ENCODE measurements at regions of chr1 and their contacts with region 1.

Region 1: DNA sequence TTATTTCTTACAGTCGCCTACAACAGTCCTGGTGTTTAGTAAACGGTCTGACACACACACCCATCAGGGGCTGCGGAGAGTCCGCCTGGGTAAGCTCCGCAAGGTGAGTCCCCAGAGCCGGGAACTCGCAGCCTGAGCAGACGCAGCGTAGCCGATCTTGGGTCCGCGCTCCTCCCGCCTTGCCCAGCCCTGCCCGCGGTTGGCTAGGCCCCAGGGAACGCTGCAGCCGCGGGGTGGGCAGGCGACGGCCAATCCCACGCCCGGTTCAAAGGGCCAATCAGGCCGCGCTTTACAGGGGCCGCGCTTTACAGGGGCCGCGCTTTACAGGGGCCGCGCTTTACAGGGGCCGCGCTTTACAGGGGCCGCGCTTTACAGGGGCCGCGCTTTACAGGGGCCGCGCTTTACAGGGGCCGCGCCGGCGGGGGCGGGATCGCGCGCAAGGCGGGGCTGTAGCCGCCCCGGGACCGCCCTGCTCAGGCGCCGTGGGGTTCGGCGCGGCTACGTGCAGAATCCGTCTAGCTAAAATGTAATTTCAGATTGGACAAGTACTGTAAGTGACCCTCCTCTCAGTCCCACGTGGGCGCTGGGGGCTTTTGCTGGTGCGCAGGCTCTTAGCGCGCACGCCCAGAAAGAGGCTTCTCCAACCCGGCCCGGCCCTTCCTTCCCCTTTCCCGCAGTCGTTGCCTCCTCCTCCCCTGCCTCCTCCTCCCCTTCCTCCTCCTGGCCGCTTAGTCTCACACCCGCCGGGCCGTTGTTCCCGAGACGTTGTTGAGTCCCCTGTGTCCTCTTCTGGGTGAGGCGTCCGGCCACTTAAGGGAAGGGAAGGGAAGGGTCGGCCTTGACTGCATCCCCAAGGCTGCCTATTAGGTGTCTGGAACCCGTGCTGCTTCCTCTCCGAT is at the start of gene FGGY:
- DNase-seq: peak; percentile 69 to 96 (median 84)
- ATAC-seq: peak; percentile 92
- H3K4me3 ChIP-seq: peak within 1 kb of the TSS; percentile 75 to 77
- H3K4me3 Mint-ChIP-seq: peak within 1 kb of the TSS; percentile 90
- H3K27ac ChIP-seq: peak within 1 kb of the TSS; percentile 81 to 92
- H3K27ac Mint-ChIP-seq: peak within 1 kb of the TSS; percentile 96
- H3K4me1 ChIP-seq: no peaks in the 10 kb centered on the region
- H3K4me1 Mint-ChIP-seq: peaks cover 25% of the 10 kb centered on the region
- H3K27me3 ChIP-seq: no peaks in the 10 kb centered on the region
- H3K27me3 Mint-ChIP-seq: no peaks in the 10 kb centered on the region
- CTCF ChIP-seq: no peak
- total RNA-seq, gene FGGY: 12.8 to 14.3 TPM

Region 2: DNA sequence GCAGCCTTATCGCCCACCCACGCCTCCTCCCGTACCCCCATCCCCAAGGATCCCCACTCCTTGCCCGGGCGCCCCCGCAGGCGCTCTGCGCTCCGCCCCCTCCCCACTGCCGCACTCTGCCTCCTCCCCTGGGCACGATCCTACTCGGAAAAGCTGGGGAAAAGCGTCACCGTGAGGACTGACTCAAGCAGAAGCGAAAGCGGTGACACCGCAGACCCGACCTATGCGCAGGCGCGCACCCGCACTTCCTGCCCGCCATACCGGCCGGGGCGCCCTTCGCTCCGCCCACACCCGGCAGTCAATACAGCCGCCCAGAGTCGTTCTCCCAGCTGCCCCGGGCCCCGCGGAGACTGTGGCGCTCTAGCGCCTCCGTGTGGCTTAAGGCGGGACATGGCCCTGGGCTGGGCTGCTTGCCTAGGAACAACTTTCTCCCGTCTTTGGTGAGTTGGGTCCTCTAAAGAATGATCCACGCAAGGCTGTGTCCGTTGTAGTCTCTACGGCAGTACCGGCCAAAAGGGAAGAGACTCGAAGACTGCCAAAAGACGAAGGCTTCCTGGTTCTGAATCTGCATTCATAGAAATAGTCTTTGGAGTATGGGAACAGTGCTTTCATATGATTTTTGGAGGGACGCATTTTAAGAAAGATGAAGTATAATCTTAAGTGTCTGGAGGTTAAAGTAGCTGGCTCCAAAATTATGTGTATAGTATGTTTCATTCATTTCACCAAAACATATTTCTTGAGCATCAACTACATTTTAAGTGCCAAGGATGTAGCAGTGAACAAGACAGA is 749.9 kb before region 1 on chr1 and contains the start of gene OMA1:
- CTCF ChIA-PET with region 1: no interaction called
- POLR2A ChIA-PET with region 1: no interaction called
- intact Hi-C with region 1: loop called (anchors 5 to 10 kb)
- DNase-seq: peak; percentile 95 to 99 (median 98)
- ATAC-seq: peak; percentile 92
- H3K4me3 ChIP-seq: peak within 1 kb of the TSS; percentile 63 to 77
- H3K4me3 Mint-ChIP-seq: peak within 1 kb of the TSS; percentile 97
- H3K27ac ChIP-seq: peak within 1 kb of the TSS; percentile 95 to 97
- H3K27ac Mint-ChIP-seq: peak within 1 kb of the TSS; percentile 99
- H3K4me1 ChIP-seq: peaks cover 12% of the 10 kb centered on the region
- H3K4me1 Mint-ChIP-seq: peaks cover 32% of the 10 kb centered on the region
- H3K27me3 ChIP-seq: no peaks in the 10 kb centered on the region
- H3K27me3 Mint-ChIP-seq: no peaks in the 10 kb centered on the region
- CTCF ChIP-seq: peak; percentile 97
- total RNA-seq, gene OMA1: 25.1 to 31.2 TPM

Region 3: GRCh38 chr1:58816072-58816746 is 480.4 kb before region 1 on chr1:
- CTCF ChIA-PET with region 1: no interaction called
- POLR2A ChIA-PET with region 1: no interaction called
- intact Hi-C with region 1: loop called in 1 of 2 experiments (anchors 1 kb)
- DNase-seq: peak; percentile 61 to 90 (median 81)
- ATAC-seq: peak; percentile 71
- H3K4me3 ChIP-seq: peak overlapping the region; percentile 84 to 92
- H3K4me3 Mint-ChIP-seq: peak overlapping the region; percentile 91
- H3K27ac ChIP-seq: peak overlapping the region; percentile 67 to 87
- H3K27ac Mint-ChIP-seq: peak overlapping the region; percentile 91
- H3K4me1 ChIP-seq: peaks cover 36% of the 10 kb centered on the region
- H3K4me1 Mint-ChIP-seq: peaks cover 46% of the 10 kb centered on the region
- H3K27me3 ChIP-seq: no peaks in the 10 kb centered on the region
- H3K27me3 Mint-ChIP-seq: no peaks in the 10 kb centered on the region
- CTCF ChIP-seq: no peak

Region 4: GRCh38 chr1:58941471-58942289 is 354.9 kb before region 1 on chr1:
- CTCF ChIA-PET with region 1: no interaction called
- POLR2A ChIA-PET with region 1: interaction called, 6 read pairs
- intact Hi-C with region 1: loop called in 1 of 2 experiments (anchors 10 kb)
- DNase-seq: peak in 7 of 9 experiments; percentile 13 to 79 (median 44)
- ATAC-seq: peak; percentile 71
- H3K4me3 ChIP-seq: peak overlapping the region; percentile 15 to 36
- H3K4me3 Mint-ChIP-seq: peak overlapping the region; percentile 73
- H3K27ac ChIP-seq: peak overlapping the region in 1 of 2 experiments; percentile 28
- H3K27ac Mint-ChIP-seq: peak overlapping the region; percentile 82
- H3K4me1 ChIP-seq: peaks cover 64% of the 10 kb centered on the region
- H3K4me1 Mint-ChIP-seq: peaks cover 81% of the 10 kb centered on the region
- H3K27me3 ChIP-seq: no peaks in the 10 kb centered on the region
- H3K27me3 Mint-ChIP-seq: no peaks in the 10 kb centered on the region
- CTCF ChIP-seq: no peak

Region 5: DNA sequence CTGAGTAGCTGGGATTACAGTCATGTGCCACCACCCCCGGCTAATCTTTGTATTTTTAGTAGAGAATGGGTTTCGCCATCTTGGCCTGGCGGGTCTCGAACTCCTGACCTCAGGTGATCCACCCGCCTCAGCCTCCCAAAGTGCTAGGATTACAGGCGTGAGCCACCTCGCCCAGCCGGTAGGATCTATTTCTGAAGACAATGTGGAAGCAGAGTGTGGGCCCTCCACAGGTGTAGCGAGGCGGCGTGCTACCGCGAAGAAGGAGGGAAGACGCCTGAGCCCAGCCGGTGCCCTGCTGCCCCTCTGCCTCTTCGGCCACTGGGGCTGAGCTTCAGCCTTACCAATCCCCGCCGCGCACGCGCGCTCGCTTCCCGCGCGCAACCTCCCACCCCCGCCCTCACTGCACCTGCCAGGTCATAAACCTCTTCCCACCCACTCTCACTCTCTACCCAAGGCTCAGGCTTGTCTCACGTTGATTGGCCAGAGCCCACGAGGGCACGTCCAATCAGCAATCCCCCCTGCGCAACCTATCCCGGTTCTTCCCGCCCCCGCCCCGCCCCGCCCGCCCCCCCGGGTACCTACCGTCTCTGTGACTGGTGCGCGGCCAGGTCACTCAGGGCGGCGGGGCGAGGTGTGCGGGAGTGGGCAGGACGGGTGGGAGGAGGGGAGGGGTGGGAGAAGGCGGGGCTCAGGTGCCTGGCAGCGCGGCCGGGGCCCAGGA is 517.7 kb after region 1 on chr1:
- CTCF ChIA-PET with region 1: no interaction called
- POLR2A ChIA-PET with region 1: no interaction called
- intact Hi-C with region 1: loop called (anchors 2 kb)
- DNase-seq: peak; percentile 73 to 97 (median 88)
- ATAC-seq: peak; percentile 94
- H3K4me3 ChIP-seq: peak overlapping the region; percentile 64 to 72
- H3K4me3 Mint-ChIP-seq: no peak overlapping the region
- H3K27ac ChIP-seq: peak overlapping the region; percentile 43 to 59
- H3K27ac Mint-ChIP-seq: peak overlapping the region; percentile 89
- H3K4me1 ChIP-seq: peaks cover 15% of the 10 kb centered on the region
- H3K4me1 Mint-ChIP-seq: peaks cover 4% of the 10 kb centered on the region
- H3K27me3 ChIP-seq: peaks cover 0 to 4% of the 10 kb centered on the region in 2 experiments
- H3K27me3 Mint-ChIP-seq: peaks cover 7% of the 10 kb centered on the region
- CTCF ChIP-seq: no peak